ENCODE measurements at regions of chr20 and their contacts with region 1.

Region 1: DNA sequence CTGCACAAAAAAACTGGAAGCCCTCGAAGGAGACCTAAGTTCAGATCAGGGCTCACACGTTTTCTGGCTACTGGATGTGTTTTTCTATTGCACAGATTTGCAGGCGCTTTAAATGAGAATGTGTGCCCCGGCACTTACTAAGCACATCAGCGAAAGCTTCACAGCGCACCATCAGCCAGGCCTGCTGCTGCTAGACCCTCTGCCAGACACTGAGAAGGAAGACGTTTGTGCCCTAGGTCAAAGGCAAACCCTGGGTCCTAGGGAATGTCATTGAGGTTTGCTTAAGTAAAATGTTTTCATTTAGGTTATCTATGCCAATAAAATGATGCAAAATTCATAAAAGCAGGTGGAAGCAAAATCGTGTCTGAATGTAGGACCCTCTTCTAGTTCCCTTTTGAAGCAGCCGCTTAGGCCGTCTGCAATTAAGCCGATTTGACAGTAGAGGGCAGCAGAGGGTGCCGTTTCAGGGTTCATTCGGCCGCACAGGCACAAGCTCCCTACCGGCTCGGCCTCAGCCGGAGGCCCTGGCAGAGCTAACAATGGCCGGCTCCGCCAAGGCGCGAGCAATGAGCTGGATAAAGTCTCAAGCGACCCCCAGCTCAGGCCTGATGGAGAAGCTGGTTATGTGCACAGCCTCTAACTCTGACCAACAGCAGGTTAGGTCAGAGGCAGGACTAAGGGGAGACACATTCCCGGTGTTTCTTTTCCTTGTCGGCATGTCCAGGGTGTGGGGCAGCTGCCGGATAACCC is 107.2 kb upstream of the FOXA2 start:
- DNase-seq: peak; percentile 41 to 58
- ATAC-seq: peak; percentile 88 to 90
- H3K4me3 ChIP-seq: peak overlapping the region; percentile 15 to 48 (median 37)
- H3K27ac ChIP-seq: no peak overlapping the region
- H3K4me1 ChIP-seq: peaks cover 6 to 12% of the 10 kb centered on the region in 2 donors
- H3K27me3 ChIP-seq: no peaks in the 10 kb centered on the region
- CTCF ChIP-seq: peak; percentile 83 to 93 (median 89)
- POLR2A ChIP-seq: no peak

Region 2: GRCh38 chr20:22379472-22379871 is 312.1 kb before region 1 on chr20:
- in situ Hi-C with region 1: no loop called
- intact Hi-C with region 1: no loop called
- DNase-seq: no peak
- ATAC-seq: no peak
- H3K4me3 ChIP-seq: no peak overlapping the region
- H3K27ac ChIP-seq: no peak overlapping the region
- H3K4me1 ChIP-seq: peaks cover 11 to 26% of the 10 kb centered on the region in 2 donors
- H3K27me3 ChIP-seq: no peaks in the 10 kb centered on the region
- CTCF ChIP-seq: no peak
- POLR2A ChIP-seq: no peak

Region 3: GRCh38 chr20:22663528-22664025 is 28.0 kb before region 1 on chr20:
- in situ Hi-C with region 1: no loop called
- intact Hi-C with region 1: no loop called
- DNase-seq: no peak
- ATAC-seq: no peak
- H3K4me3 ChIP-seq: no peak overlapping the region
- H3K27ac ChIP-seq: no peak overlapping the region
- H3K4me1 ChIP-seq: no peaks in the 10 kb centered on the region
- H3K27me3 ChIP-seq: no peaks in the 10 kb centered on the region
- CTCF ChIP-seq: no peak
- POLR2A ChIP-seq: no peak

Region 4: GRCh38 chr20:23178806-23179205 is 487.3 kb after region 1 on chr20:
- in situ Hi-C with region 1: loop called in 1 of 4 experiments (anchors 10 kb)
- intact Hi-C with region 1: no loop called
- DNase-seq: peak in 1 of 2 donors; percentile 54
- ATAC-seq: peak; percentile 69 to 83
- H3K4me3 ChIP-seq: no peak overlapping the region
- H3K27ac ChIP-seq: peak overlapping the region; percentile 17 to 68 (median 53)
- H3K4me1 ChIP-seq: peaks cover 9 to 13% of the 10 kb centered on the region in 2 donors
- H3K27me3 ChIP-seq: no peaks in the 10 kb centered on the region
- CTCF ChIP-seq: peak; percentile 52 to 83 (median 72)
- POLR2A ChIP-seq: no peak

Region 5: GRCh38 chr20:23200918-23201317 is 509.4 kb after region 1 on chr20:
- in situ Hi-C with region 1: no loop called
- intact Hi-C with region 1: loop called (anchors 5 kb)
- DNase-seq: peak in 1 of 2 donors; percentile 46
- ATAC-seq: peak in 1 of 2 donors; percentile 85
- H3K4me3 ChIP-seq: no peak overlapping the region
- H3K27ac ChIP-seq: no peak overlapping the region
- H3K4me1 ChIP-seq: peaks cover 14 to 15% of the 10 kb centered on the region in 2 donors
- H3K27me3 ChIP-seq: no peaks in the 10 kb centered on the region
- CTCF ChIP-seq: peak; percentile 39 to 63 (median 54)
- POLR2A ChIP-seq: no peak

Region 6: GRCh38 chr20:23245553-23246181 is 554.1 kb after region 1 on chr20:
- in situ Hi-C with region 1: loop called in 2 of 4 experiments (anchors 25 kb)
- intact Hi-C with region 1: no loop called
- DNase-seq: peak in 1 of 2 donors; percentile 24
- ATAC-seq: peak in 1 of 2 donors; percentile 27
- H3K4me3 ChIP-seq: no peak overlapping the region
- H3K27ac ChIP-seq: peak overlapping the region in 2 of 4 donors; percentile 39 to 50
- H3K4me1 ChIP-seq: peaks cover 0 to 5% of the 10 kb centered on the region in 2 donors
- H3K27me3 ChIP-seq: no peaks in the 10 kb centered on the region
- CTCF ChIP-seq: peak in 4 of 5 experiments; percentile 4 to 37 (median 27)
- POLR2A ChIP-seq: no peak

Region 7: GRCh38 chr20:23340524-23340923 is 649.0 kb after region 1 on chr20:
- in situ Hi-C with region 1: loop called (anchors 5 to 10 kb)
- intact Hi-C with region 1: loop called (anchors 1 kb)
- DNase-seq: peak; percentile 39 to 63
- ATAC-seq: peak; percentile 84 to 87
- H3K4me3 ChIP-seq: no peak overlapping the region
- H3K27ac ChIP-seq: no peak overlapping the region
- H3K4me1 ChIP-seq: peaks cover 6% of the 10 kb centered on the region in 2 donors
- H3K27me3 ChIP-seq: no peaks in the 10 kb centered on the region
- CTCF ChIP-seq: peak; percentile 33 to 75 (median 74)
- POLR2A ChIP-seq: no peak

Measured in gastrocnemius medialis (tissue), 4 donors.